GM12878 (cell line): ENCODE measurements at regions of chr2 and their contacts with region 1.

Region 1: DNA sequence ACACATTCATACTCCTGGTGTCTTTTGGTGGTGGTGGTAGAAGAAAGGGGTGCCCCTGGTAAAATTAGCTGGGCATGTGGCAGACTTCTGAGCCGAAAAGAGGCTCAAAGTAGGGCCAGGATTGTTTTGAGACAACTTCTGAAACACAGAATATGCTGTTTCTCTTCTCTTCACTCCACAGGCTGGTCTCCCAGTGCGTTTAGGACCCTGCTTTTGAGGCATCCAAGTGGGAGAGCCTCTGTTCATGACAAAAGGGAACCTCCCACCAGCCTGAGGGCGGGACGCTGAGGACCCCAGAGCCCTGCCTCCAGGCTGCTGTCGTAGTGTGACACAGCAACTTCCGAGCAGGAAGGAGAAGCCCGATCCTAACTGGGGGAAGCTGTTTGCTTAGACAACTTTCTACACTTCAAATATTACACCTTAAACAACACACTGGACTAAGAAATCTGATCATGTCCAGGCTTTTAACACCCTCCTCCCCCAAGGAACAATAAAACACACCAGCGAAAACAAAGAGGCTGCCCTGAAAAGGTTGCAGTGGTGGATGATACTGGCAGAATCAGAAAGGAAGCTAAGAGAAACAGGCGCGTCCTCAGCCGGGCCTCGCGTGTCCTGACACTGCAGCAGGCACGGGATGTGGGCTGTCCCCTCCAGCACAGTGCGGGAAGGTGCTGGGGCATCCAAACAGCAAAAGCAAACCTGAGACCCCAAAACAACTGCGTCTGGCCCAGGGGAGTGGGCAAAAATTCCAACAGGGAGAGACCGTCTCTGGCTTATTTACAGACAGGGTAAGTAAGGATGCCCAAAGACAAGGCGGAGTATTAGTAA is 9.3 kb downstream of the SERTAD2 start:
- DNase-seq: no peak
- ATAC-seq: peak; percentile 76
- H3K4me3 ChIP-seq: peak overlapping the region; percentile 87
- H3K27ac ChIP-seq: peak overlapping the region; percentile 95
- H3K4me1 ChIP-seq: peaks cover 46% of the 10 kb centered on the region
- H3K27me3 ChIP-seq: no peaks in the 10 kb centered on the region
- CTCF ChIP-seq: no peak
- EP300 ChIP-seq: no peak; a peak in 1 of 4 replicates
- POLR2A ChIP-seq: peak; percentile 74
- RAD21 ChIP-seq: no peak

Region 2: DNA sequence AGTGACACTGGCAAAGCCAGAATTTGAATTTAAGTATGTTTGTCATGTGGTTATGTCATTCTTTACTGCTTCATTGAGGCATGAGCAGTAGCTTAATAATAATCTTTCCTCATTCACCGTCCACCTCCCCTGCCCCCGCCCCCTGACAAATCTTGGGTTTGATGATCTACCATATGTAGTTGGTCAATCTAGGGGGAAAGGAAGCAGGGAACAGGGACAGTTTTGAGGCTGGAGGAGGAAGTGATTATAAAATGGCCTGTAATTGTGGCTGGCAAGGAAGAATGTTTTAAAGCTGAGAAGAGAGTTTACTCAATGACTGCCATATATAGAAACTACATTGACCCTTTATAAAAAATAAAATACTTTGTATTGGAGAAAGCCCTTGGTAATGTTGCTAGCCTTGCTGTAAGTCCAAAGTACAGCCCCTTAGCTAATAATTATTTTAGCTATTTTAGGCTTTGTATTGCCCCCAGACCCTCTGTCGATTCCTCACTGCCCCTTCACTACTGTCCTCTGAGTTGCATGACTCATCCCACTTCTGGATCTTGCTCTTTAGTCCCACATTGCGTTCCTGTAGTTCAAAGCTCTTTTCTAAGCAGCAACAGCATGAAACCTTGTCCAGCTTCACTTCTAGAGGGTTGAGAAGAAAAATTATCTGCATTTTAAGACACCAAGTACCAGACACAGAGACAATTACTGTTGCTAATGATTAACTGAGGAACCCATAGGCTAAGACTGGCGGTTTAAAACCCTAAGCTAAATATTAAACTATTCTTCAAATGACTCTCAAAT is 538.5 kb before region 1 on chr2:
- CTCF ChIA-PET with region 1: no interaction called
- POLR2A ChIA-PET with region 1: no interaction called
- RAD21 ChIA-PET with region 1: no interaction called
- SMC1A ChIA-PET with region 1: no interaction called
- in situ Hi-C with region 1: no loop called
- intact Hi-C with region 1: no loop called
- DNase-seq: no peak
- ATAC-seq: peak; percentile 40
- H3K4me3 ChIP-seq: no peak overlapping the region
- H3K27ac ChIP-seq: no peak overlapping the region
- H3K4me1 ChIP-seq: peaks cover 44% of the 10 kb centered on the region
- H3K27me3 ChIP-seq: no peaks in the 10 kb centered on the region
- CTCF ChIP-seq: no peak
- EP300 ChIP-seq: 0 out of 4 replicates have a peak, but pooled peaks of 1 of the 2 experiments have one; percentile 24
- POLR2A ChIP-seq: no peak
- RAD21 ChIP-seq: no peak

Region 3: GRCh38 chr2:64609227-64609941 is 35.0 kb before region 1 on chr2:
- CTCF ChIA-PET with region 1: interaction called, 19 read pairs
- POLR2A ChIA-PET with region 1: interaction called, 30 read pairs
- RAD21 ChIA-PET with region 1: interaction called, 73 read pairs
- SMC1A ChIA-PET with region 1: interaction called, 48 read pairs
- in situ Hi-C with region 1: no loop called
- intact Hi-C with region 1: loop called (anchors 2 kb)
- DNase-seq: no peak
- ATAC-seq: peak; percentile 62
- H3K4me3 ChIP-seq: peak overlapping the region; percentile 68
- H3K27ac ChIP-seq: peak overlapping the region; percentile 14; the same call in 1 of the 2 replicates
- H3K4me1 ChIP-seq: peaks cover 38% of the 10 kb centered on the region
- H3K27me3 ChIP-seq: no peaks in the 10 kb centered on the region
- CTCF ChIP-seq: peak; percentile 30 to 63 (median 33); a peak in 4 of 6 replicates
- EP300 ChIP-seq: no peak
- POLR2A ChIP-seq: peak; percentile 70
- RAD21 ChIP-seq: peak; percentile 42

Region 4: GRCh38 chr2:64704161-64704560 is 59.8 kb after region 1 on chr2:
- CTCF ChIA-PET with region 1: interaction called, 13 read pairs
- POLR2A ChIA-PET with region 1: interaction called, 81 read pairs
- RAD21 ChIA-PET with region 1: interaction called, 55 read pairs
- SMC1A ChIA-PET with region 1: interaction called, 262 read pairs
- in situ Hi-C with region 1: no loop called
- intact Hi-C with region 1: loop called (anchors 2 kb)
- DNase-seq: no peak
- ATAC-seq: peak; percentile 14
- H3K4me3 ChIP-seq: 0 out of 2 replicates have a peak overlapping the region, but pooled peaks have one; percentile 7
- H3K27ac ChIP-seq: peak overlapping the region; percentile 54
- H3K4me1 ChIP-seq: peaks cover 30% of the 10 kb centered on the region
- H3K27me3 ChIP-seq: no peaks in the 10 kb centered on the region
- CTCF ChIP-seq: no peak
- EP300 ChIP-seq: no peak
- POLR2A ChIP-seq: no peak
- RAD21 ChIP-seq: no peak

Region 5: GRCh38 chr2:64750817-64751285 is 106.5 kb after region 1 on chr2:
- CTCF ChIA-PET with region 1: interaction called, 153 read pairs
- POLR2A ChIA-PET with region 1: interaction called, 195 read pairs
- RAD21 ChIA-PET with region 1: interaction called, 514 read pairs
- SMC1A ChIA-PET with region 1: interaction called, 945 read pairs
- in situ Hi-C with region 1: no loop called
- intact Hi-C with region 1: loop called (anchors 1 kb)
- DNase-seq: peak; percentile 99
- ATAC-seq: peak; percentile 89
- H3K4me3 ChIP-seq: peak overlapping the region; percentile 98
- H3K27ac ChIP-seq: peak overlapping the region; percentile 92
- H3K4me1 ChIP-seq: 0 out of 2 replicates have a peak, but pooled peaks cover 3% of the 10 kb centered on the region
- H3K27me3 ChIP-seq: no peaks in the 10 kb centered on the region
- CTCF ChIP-seq: no peak; a peak in 2 of 6 replicates
- EP300 ChIP-seq: no peak; a peak in 1 of 4 replicates
- POLR2A ChIP-seq: peak; percentile 92
- RAD21 ChIP-seq: peak; percentile 31; the same call in 1 of the 2 replicates

Region 6: DNA sequence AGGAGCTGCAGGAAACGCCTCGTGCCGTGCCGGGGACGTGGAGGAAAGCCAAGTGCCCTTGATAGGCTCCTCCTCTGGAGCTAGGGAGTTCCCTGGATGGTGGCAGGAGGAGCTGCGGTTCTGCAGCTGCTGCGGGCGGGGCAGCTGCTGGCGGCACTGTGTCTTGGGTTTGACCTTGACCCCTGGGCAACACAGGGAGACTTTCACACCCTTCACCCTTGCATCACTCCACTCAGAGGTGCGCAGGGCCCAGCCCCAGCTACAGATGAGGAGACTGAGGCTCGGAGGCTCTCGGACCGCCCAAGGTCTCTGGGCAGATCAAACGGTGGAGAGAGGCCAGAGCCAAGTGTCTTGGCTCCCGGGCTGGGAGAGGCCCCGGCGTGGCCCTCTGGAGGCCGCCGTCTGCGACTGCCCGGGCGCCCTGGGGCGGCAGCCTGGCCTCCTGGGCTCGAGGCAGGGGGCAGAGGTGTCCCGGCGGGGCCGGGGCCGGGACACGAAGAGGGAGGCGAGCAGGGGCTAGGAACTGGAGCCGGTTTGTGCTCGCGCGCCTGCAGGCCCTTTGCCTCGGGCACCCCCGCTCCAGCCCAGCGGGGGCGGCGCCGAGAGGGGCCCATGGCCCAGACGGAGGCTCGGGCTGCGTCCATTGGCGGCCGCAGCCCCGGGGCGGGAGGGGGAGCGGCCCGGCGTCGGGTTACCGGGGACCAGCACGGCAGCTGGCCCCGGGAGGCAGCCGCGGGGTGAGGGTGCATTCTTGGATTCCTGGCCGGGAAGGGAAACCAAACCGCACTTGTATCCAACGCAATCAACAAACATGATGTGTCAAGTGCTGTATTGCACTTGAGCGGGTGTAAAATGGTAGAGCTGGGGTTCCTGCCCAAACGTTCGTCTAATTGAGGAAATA is 215.2 kb after region 1 on chr2:
- CTCF ChIA-PET with region 1: interaction called, 20 read pairs
- POLR2A ChIA-PET with region 1: interaction called, 9 read pairs
- RAD21 ChIA-PET with region 1: interaction called, 88 read pairs
- SMC1A ChIA-PET with region 1: interaction called, 23 read pairs
- in situ Hi-C with region 1: loop called (anchors 5 kb)
- intact Hi-C with region 1: no loop called
- DNase-seq: no peak
- ATAC-seq: peak; percentile 53
- H3K4me3 ChIP-seq: peak overlapping the region; percentile 65
- H3K27ac ChIP-seq: peak overlapping the region; percentile 91
- H3K4me1 ChIP-seq: peaks cover 54% of the 10 kb centered on the region
- H3K27me3 ChIP-seq: no peaks in the 10 kb centered on the region
- CTCF ChIP-seq: no peak
- EP300 ChIP-seq: no peak
- POLR2A ChIP-seq: peak; percentile 40
- RAD21 ChIP-seq: no peak

Region 7: GRCh38 chr2:65040400-65041261 is 396.2 kb after region 1 on chr2:
- CTCF ChIA-PET with region 1: no interaction called
- POLR2A ChIA-PET with region 1: no interaction called
- RAD21 ChIA-PET with region 1: no interaction called
- SMC1A ChIA-PET with region 1: no interaction called
- in situ Hi-C with region 1: no loop called
- intact Hi-C with region 1: loop called (anchors 5 kb)
- DNase-seq: no peak
- ATAC-seq: peak; percentile 99
- H3K4me3 ChIP-seq: no peak overlapping the region
- H3K27ac ChIP-seq: no peak overlapping the region
- H3K4me1 ChIP-seq: peaks cover 2% of the 10 kb centered on the region; the same call in 1 of the 2 replicates
- H3K27me3 ChIP-seq: no peaks in the 10 kb centered on the region
- CTCF ChIP-seq: peak; percentile 93 to 96 (median 95)
- EP300 ChIP-seq: no peak
- POLR2A ChIP-seq: no peak
- RAD21 ChIP-seq: peak; percentile 83